Heart right ventricle (tissue), 16 donors: ENCODE measurements at regions of chr3 and their contacts with region 1.

Region 1: GRCh38 chr3:165111401-165111800 is 33.1 kb upstream of the SI start:
- DNase-seq: no peak
- ATAC-seq: no peak
- H3K4me3 ChIP-seq: no peak overlapping the region
- H3K27ac ChIP-seq: no peak overlapping the region
- H3K4me1 ChIP-seq: no peaks in the 10 kb centered on the region
- H3K27me3 ChIP-seq: no peaks in the 10 kb centered on the region
- CTCF ChIP-seq: no peak

Region 2: DNA sequence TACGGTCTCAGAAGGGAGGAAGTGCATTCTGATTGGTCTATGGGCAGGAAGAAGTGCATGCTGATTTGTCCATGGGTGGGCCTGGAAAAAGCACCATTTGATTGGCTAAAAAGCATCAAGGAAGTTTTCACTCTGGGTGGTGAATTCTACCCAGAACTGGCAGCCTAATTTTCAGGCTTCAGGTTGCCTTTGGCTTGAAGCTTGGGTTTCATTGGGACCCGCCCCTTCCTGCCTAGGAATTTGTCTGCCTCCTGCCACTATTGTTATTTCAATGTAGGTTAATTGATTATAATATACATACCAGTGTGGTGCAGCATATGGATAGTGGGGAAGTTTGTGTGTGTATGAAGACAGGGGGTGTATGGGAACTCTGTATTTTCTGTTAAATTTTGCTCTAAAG is 1389.0 kb before region 1 on chr3:
- intact Hi-C with region 1: loop called in 1 of 10 experiments (anchors 10 kb)
- DNase-seq: no peak
- ATAC-seq: no peak
- H3K4me3 ChIP-seq: no peak overlapping the region
- H3K27ac ChIP-seq: no peak overlapping the region
- H3K4me1 ChIP-seq: no peaks in the 10 kb centered on the region
- H3K27me3 ChIP-seq: no peaks in the 10 kb centered on the region
- CTCF ChIP-seq: no peak

Region 3: DNA sequence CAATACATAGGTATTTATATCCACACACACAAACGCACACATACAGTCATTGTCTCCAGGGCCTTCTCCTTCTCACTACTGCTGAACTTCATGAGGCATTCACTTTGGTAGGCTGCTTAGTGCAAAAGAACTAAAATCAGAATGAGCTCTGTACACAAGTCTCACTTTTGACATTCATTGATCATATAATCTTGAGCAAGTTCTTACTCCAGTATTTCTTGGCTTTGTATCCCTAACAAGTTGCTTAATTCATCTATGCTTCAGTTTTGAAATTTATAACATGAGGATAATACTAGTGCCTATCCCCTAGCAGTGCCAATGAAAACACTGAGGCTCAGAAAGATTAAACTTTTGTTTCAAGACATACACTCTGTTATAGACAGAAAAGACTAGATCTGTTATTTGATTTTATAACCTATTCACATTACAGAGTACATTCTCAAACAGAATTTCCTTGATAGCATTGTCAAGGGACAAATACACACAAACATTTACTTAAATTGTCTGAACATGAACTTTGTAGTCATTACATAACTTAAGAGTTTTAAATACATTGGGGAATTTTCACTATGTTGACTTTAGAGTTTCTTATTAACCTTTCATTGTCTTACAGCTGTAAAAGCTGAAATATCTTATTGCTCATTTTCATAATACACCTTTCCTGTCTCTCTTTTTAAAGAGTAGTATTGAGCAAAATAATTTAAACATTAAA is 21.9 kb after region 1 on chr3:
- intact Hi-C with region 1: no loop called
- DNase-seq: no peak
- ATAC-seq: no peak
- H3K4me3 ChIP-seq: no peak overlapping the region
- H3K27ac ChIP-seq: no peak overlapping the region
- H3K4me1 ChIP-seq: no peaks in the 10 kb centered on the region
- H3K27me3 ChIP-seq: no peaks in the 10 kb centered on the region
- CTCF ChIP-seq: no peak

Region 4: DNA sequence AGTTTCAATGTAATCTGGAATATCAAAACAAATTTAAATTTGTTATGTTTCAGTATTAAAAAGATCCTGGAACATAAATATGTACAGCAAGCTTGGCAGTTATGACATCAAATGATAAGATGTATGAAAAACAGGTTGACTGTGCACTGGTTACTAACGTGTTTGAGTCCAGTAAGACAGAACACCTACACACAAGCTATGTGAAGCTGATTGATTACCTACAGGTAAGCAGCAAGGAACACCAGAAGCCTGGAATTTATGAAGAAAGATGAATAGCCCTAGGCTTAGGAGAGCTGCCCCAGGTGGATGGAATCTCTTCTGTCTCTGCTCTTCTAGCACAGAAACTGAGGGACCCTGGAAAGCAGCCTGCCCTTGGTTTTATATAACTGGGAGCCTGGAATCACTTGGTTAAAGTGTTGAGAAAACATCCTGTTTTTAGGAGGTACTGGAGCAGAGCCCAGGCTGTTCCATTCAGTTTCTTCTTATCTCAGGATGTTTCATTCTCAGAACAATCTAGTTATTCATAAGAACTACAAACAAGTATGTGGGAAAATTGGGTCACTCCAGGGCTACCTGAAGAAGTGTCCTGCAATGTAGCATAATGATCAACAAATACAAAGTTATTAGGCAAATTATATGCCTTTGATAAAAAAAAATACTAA is 48.5 kb after region 1 on chr3:
- intact Hi-C with region 1: no loop called
- DNase-seq: peak in 1 of 2 donors; percentile 3
- ATAC-seq: peak in 2 of 8 donors; percentile 20 to 46
- H3K4me3 ChIP-seq: no peak overlapping the region
- H3K27ac ChIP-seq: no peak overlapping the region
- H3K4me1 ChIP-seq: no peaks in the 10 kb centered on the region
- H3K27me3 ChIP-seq: no peaks in the 10 kb centered on the region
- CTCF ChIP-seq: no peak